ENCODE measurements at regions of chr18 and their contacts with region 1.

Region 1: DNA sequence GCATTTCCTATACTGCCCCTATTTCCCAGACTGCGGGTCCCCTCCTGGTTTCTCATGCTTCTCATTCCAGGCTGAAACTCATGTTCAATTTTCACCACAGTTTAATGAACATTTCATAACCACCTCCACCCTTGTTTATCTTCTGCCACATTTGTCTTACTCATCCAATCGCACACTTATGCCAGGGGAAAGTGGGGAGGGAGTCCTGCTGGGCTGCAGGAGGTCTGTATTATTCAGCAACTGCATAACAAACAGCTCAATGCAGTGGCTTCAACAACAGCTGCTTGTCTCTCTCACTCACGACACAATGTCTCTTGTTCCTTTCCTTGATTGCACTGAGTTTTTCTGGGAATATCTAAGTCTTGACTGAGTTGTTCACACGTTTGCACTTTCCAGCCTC is 106.0 kb downstream of the ZNF519 start:
- DNase-seq: no peak
- H3K4me3 ChIP-seq: no peak overlapping the region
- H3K27ac ChIP-seq: no peak overlapping the region
- H3K4me1 ChIP-seq: no peaks in the 10 kb centered on the region
- H3K27me3 ChIP-seq: no peaks in the 10 kb centered on the region
- CTCF ChIP-seq: no peak

Region 2: DNA sequence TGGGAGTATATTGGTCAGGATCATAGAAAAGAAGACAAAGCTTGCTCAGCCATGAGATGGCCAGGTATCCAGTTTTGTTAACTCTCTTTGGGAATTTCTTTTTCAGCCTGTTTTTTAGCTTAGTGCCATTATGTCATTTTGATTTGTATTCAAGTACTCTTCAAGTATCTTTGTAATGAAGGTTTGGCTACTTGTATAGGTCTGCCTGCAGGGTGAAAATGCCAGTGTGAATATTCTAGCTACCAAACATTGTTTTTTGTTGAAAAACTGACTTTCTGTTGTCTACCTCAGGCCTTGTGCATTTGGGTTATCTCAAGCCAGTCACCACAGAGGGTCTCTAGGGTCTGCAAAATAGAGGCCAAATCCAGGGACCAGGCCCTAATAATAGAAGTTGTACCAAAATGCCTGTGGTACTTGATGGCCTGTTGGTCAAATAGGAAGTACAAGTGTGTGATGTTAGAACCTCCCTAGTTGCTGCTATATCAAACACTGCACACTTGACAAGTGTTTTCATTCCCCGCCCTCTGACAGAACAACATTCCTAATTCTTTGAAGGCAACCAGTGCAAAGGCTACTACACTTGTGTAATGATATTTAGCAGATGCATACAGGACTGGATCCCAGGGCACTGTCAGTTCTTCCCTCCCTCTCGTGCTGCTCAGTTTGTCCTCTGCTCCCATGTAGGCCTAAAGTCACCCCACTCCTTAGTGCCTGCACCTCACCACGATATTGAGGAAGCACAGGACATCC is 263.3 kb before region 1 on chr18:
- intact Hi-C with region 1: no loop called
- DNase-seq: no peak
- H3K4me3 ChIP-seq: no peak overlapping the region
- H3K27ac ChIP-seq: no peak overlapping the region
- H3K4me1 ChIP-seq: no peaks in the 10 kb centered on the region
- H3K27me3 ChIP-seq: no peaks in the 10 kb centered on the region
- CTCF ChIP-seq: no peak

Region 3: GRCh38 chr18:13973056-13973575 is 53.1 kb before region 1 on chr18:
- intact Hi-C with region 1: loop called (anchors 10 kb)
- DNase-seq: no peak
- H3K4me3 ChIP-seq: no peak overlapping the region
- H3K27ac ChIP-seq: no peak overlapping the region
- H3K4me1 ChIP-seq: no peaks in the 10 kb centered on the region
- H3K27me3 ChIP-seq: no peaks in the 10 kb centered on the region
- CTCF ChIP-seq: no peak